ENCODE measurements at regions of chr14 and their contacts with region 1.

Region 1: DNA sequence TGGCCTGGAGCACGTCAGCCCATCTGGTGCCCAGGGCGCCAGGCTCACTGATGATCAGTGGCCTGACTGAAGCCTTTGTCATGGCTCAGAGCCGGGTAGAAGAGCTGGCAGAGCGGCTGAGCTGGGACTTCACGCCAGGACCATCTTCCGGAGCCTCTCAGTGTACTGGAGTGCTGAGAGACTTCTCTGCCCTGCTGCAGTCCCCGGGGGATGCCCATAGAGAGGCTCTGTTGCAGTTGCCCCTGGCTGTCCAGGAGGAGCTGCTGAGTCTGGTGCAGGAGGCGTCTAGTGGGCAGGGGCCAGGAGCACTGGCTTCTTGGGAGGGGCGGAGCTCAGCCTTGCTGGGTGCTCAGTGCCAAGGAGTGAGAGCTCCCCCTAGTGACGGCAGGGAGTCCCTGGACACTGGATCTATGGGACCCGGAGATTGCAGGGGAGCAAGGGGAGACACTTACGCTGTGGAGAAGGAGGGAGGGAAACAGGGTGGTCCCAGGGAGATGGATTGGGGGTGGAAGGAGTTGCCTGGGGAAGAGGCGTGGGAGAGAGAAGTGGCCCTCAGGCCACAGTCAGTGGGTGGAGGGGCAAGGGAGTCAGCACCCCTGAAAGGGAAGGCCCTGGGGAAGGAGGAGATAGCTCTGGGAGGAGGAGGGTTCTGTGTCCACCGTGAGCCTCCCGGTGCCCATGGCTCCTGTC is 2.0 kb downstream of the KHNYN start:
- DNase-seq: peak; percentile 52 to 97 (median 80)

Region 2: DNA sequence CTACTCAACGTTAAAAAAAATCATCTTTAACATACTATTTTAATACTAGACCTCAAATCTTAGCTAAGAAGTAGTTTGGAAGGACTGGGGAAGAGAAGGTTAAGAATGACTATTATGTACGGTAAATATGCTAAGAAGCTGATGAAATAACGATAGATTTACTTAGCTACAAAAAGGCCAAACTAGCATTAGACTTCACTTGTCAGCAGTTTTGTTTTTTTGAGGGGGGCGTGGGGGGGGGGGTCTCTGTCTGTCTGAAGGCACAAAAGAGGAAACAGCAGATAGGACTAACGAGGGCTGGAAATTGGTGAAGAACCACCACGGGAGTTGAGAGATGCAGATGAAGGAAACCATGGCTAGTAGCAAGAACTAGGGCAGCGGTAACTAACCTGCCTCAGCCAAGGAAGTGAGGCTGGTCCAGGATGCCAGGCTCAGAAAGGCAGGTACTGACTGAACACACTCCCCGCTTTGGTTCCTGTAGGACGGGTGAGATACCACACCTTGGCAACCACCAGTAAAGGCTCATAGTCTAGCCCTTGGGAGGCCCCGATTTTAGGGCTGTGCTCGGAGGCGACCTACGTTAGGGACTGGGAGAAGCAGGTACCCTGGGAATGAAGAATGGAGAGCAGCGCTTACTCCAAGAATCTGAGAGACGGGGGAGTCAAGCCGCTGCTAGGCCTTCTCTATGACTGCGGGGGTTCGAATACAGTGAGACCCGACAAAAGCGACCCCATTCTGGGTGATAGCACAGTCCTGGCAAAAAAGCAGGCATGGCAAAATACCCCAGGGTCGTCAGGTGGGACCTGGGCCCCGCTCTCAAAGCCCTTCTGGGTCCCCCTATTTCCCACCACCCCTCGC is 200.2 kb before region 1 on chr14:
- intact Hi-C with region 1: no loop called
- DNase-seq: no peak

Region 3: DNA sequence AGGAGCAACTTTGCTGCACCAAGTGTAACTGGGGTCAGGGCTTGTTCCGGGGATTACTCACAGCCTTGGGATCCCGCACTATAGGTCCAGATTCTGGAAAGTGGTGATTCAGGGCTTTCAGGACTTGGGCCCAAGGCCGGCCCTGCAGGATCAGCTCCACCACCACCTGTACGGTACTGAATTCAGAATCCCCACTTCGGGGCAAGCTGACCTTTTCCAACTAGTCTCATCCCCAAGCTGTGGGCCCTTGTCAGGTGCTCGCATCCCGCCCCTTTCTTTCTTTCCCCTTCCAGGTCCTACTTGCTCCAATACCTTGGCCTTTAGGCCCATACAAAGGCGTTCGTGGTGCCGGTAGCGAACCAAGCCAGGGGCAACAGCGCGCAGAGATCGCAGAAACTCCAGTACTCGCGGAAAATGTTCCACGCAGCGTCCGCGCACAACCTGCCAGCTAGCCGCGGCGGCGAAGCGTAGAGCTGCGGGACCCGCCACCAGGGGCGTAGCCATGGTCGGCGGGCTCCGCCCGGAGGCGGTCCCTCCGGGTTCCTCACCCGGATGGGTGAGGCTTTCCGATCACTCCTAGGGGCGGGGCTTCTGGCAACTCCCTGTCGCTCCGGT is 189.8 kb before region 1 on chr14:
- intact Hi-C with region 1: loop called (anchors 10 kb)
- DNase-seq: peak in 8 of 10 donors; percentile 83 to 98 (median 90)

Region 4: DNA sequence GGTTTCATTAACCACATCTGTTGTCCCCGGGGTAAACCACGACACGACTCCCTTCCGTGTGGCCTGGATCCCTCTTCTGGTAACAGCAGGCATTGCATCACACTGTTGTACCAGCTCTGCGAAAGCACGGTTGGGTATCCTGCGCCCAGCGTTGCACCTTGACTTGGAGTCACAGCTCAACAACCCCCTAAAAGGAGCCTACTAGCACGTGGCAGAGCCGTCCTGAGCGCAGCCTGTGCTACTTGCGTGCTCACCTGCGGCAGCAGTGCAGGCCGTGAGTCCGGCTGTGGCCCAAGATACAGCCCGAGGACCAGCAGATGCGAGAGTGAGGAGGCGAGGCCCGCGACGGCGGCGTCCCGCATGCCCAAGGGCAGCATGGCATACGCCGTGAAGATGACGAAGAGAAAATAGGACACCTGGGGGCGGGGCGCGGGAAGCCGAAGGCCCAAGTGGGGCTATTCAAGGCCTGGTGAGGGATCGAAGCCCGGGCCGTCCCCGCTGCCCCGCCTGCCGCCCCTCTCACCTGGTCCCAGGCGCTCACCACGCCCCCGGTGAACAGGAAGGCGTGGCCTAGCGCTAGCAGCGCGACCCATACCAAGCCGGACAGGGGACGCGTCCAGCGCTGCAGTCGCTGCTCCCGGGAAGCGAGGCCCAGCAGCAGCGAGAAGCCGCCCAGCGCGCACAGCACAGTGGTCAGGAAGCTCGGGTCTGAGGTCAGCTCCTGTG is 99.3 kb before region 1 on chr14:
- intact Hi-C with region 1: loop called (anchors 1 kb)
- DNase-seq: peak in 7 of 10 donors; percentile 57 to 90 (median 66)

Region 5: DNA sequence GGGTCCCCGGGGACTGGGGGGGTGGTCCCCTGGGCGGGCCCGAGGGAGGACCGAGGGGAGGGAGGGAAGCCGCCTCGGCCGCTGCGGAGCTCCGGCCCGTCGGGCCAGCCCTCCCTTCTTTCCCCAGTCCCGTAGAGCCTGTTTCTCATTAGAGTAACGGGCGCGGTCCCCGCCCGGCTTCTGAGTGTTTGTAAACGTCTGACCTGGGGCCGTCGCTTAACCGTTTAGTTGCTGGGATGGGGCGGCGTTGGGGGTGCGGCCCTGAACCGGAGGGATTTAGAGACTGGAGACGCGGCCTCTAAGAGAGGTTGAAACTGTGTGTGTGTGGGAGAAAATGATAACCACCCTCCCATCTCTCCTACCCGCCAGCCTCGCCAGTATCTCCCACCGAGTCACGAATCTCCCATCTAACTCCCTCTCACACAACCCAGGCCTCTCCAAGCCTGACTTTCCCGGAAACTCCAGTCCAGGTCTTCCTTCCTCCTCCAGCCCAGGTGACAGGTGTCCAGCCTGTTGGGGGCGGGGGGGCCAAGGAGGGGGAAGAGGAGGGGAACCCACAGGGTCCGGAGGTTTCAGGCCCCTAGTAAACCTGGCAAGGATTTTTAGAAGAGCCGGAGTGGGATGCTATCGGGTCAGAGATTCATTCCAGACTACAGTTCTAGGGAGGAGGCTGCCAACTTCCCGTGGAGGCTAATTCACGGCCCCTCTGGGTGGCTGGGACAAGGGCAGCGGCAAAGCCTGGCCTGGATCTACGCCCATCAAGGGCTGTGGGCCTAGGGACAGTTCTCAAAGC is 64.8 kb before region 1 on chr14:
- intact Hi-C with region 1: loop called (anchors 5 kb)
- DNase-seq: peak in 6 of 10 donors; percentile 8 to 89 (median 38)